ENCODE measurements at regions of chr1 and their contacts with region 1.

Region 1: DNA sequence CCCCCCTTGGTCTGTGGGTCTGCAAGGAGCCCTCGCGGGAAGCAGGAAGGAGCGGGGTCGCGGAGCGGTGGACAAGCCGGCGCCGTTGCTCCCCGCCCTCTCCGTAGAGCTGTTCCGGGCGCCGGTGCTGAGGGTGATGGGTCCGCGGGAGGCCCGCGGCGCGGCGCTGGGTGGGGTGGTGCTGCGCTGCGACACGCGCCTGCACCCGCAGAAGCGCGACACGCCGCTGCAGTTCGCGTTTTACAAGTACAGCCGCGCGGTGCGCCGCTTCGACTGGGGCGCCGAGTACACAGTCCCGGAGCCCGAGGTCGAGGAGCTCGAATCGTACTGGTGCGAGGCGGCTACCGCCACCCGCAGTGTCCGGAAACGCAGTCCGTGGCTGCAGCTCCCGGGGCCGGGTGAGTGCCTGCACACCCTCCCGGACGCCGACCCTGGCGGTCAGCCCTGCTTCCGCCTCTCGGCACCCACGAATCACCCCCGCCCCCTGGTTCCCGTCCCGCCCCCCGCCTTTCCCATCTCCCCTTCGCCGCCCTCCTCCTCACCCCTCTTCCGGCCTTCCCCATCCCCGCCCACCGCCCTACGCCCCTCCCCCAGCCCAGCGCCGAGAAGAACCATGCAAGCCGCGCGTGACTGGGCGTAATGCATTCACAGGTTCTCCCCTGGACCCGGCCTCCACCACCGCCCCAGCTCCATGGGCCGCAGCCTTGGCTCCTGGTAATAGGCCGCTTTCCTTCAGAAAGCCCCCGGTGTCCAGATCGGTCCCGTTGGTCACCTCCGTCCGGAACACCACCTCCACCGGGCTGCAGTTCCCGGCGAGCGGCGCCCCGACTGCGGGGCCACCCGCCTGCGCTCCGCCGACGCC is 5.5 kb downstream of the FCRLB start:
- DNase-seq: peak; percentile 66
- H3K4me3 Mint-ChIP-seq: peak overlapping the region; percentile 85
- H3K27ac Mint-ChIP-seq: peak overlapping the region; percentile 19
- H3K4me1 Mint-ChIP-seq: peaks cover 53% of the 10 kb centered on the region
- H3K27me3 Mint-ChIP-seq: peaks cover 49% of the 10 kb centered on the region

Region 2: DNA sequence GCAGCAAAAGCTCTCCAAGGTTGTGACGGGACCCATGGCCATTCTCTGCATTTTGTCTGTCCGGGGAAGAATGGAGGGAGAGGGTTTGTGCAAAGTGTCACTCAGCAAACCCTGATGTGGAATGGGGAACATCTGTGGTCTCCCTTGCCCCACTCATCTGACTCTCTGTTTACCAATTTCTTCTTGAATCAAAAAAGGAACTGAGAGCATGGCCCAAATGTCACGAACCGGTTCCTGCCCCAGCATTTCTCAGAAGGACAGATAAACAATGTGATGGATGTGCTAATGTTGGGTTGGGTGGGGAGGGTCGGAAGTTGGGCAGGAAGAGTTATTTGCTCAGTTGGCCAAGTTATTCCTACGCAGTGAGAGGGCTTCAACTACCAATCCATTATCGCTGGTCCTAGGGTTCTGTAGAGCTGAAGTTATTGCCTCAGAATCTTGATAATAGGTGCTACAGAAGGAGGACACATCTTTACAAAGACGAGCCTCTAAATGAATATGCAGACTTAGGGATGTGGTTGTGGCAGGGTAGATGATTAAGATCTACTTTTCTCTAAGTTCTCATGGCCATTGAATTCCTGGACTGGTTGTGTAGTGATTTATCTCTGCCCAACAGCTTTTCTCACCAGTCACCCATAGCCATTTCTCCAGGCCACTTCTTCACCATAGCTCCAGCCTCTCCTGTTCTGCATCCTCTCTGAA is 13.2 kb after region 1 on chr1:
- intact Hi-C with region 1: loop called (anchors 1 kb)
- DNase-seq: no peak
- H3K4me3 Mint-ChIP-seq: no peak overlapping the region
- H3K27ac Mint-ChIP-seq: no peak overlapping the region
- H3K4me1 Mint-ChIP-seq: peaks cover 53% of the 10 kb centered on the region
- H3K27me3 Mint-ChIP-seq: peaks cover 24% of the 10 kb centered on the region